CD14-positive monocyte (primary cell): ENCODE measurements at regions of chr10 and their contacts with region 1.

Region 1: DNA sequence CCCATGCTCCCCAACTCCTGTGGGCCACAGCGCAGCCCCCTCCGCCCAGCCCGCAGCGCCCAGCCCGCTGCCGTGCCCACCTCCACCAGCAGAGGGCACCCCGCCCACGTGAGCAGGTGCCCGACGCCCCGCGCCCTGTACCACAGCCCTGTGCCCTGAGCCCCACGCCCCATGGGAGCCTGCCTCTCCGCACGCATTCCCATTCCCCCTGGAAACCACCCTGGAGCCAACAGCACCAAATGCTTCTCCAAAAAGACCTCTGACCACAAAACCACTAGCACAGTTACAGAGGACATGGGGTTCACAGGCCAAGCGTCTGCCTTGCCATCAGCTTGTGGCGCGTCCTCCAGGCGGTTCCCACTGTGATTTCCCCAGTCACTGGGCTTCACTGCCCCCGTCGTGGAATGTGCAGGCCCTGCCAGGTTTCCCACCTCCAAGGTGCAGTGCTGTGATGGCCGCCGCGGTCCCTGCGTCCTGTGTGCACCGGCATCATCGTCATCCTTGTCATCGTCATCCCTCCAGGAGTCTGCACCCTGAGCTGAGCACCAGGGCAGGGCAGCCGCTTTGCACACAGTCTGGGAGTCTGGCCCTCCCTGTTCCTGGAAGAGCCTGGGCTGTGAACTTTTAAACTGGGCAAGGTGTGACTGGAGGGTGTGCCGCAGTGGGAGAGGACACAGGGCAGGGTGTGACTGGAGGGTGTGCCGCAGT is 61.7 kb downstream of the PWWP2B start:
- DNase-seq: peak; percentile 43 to 71 (median 49)
- H3K4me3 ChIP-seq: no peak overlapping the region
- H3K4me3 Mint-ChIP-seq: no peak overlapping the region
- H3K27ac ChIP-seq: no peak overlapping the region
- H3K27ac Mint-ChIP-seq: peak overlapping the region in 2 of 7 donors; percentile 15 to 25
- H3K4me1 ChIP-seq: peaks cover 0 to 8% of the 10 kb centered on the region in 2 donors
- H3K4me1 Mint-ChIP-seq: peaks cover 4% of the 10 kb centered on the region
- H3K27me3 ChIP-seq: peaks cover 0 to 2% of the 10 kb centered on the region in 2 donors
- H3K27me3 Mint-ChIP-seq: peaks cover 5 to 15% (median 8%) of the 10 kb centered on the region in 3 donors
- CTCF ChIP-seq: peak; percentile 94

Region 2: DNA sequence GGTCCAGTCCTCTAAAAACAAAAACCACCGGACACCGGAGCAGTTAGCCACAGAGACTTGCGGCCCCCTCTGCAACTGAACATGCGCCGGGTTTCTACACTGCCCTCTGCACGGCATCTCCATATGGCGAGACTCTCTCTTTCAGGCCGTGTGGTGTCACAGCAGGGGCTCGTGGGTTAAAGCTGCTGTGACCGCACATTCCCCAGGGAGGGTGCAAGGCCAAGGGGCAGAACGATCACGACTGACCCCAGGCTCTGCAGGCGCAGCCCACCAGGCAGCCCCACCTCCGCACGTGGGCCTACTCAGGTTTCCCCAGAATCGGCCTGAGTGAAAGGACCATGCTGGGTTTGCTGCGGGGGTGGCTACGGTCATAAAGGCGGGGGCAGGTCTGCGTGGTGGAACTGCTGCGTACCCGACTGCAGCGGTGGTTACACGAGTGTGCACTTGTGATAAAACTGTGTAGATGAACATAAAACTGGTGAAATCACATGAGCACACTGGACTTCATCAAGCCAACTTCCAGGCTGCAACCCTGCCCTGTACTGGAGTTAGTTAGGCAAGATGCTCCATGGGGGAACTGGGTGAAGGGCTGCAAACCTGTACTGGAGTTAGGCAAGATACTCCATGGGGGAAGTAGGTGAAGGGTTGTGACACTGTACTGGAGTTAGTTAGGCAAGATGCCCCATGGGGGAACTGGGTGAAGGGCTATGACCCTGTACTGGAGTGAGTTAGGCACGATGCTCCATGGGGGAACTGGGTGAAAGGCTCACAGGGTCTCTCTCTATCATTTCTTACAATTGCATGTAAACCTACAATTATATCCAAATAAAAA is 639.3 kb before region 1 on chr10:
- intact Hi-C with region 1: no loop called
- DNase-seq: peak in 1 of 3 donors; percentile 1
- H3K4me3 ChIP-seq: no peak overlapping the region
- H3K4me3 Mint-ChIP-seq: no peak overlapping the region
- H3K27ac ChIP-seq: no peak overlapping the region
- H3K27ac Mint-ChIP-seq: no peak overlapping the region
- H3K4me1 ChIP-seq: no peaks in the 10 kb centered on the region
- H3K4me1 Mint-ChIP-seq: no peaks in the 10 kb centered on the region
- H3K27me3 ChIP-seq: no peaks in the 10 kb centered on the region
- H3K27me3 Mint-ChIP-seq: peaks cover 4 to 8% (median 7%) of the 10 kb centered on the region in 3 donors
- CTCF ChIP-seq: no peak

Region 3: DNA sequence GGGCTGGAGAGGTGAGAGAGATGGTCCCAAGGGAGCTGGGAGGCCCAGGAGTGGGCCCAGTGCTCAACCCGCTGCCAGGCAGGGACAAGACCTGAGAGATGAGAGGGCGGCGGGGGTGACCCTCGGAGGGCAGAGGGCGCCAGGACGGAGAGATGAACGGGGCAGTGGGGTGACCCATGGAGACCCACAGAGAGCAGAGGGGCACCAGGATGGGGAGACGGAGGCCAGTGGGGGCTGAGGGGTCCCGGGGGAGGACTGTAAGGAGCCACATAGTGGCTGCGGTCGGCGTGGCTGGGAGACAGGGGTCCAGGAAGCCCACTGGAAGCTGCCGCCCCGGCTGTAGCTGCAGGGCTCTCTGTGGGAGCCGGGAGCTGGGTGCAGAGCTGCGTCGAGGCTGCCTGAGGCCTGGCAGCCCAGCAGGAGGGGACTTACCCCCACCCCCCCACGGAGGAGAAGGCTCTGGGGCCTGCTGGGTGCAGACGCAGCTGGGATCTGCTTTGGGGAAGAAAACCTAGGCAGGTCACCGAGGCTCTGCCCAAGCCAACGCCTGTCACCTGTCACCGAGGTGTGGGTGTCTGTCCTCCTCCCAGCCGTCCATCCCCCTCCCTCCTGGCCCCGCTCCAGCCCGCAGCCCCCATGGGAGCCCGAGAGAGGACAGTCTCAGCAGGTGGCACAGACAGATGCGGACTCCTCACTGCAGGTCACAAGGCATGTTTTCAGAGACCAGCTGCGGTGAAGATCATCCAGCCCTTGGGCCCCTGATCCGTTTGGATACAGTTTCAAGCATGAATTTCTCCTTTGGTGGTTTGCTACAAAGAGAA is 36.6 kb before region 1 on chr10:
- intact Hi-C with region 1: no loop called
- DNase-seq: no peak
- H3K4me3 ChIP-seq: peak overlapping the region; percentile 2 to 70 (median 17)
- H3K4me3 Mint-ChIP-seq: peak overlapping the region; percentile 62 to 72
- H3K27ac ChIP-seq: peak overlapping the region; percentile 91 to 96
- H3K27ac Mint-ChIP-seq: peak overlapping the region; percentile 91 to 99 (median 95)
- H3K4me1 ChIP-seq: peaks cover 67 to 69% of the 10 kb centered on the region in 2 donors
- H3K4me1 Mint-ChIP-seq: peaks cover 59% of the 10 kb centered on the region
- H3K27me3 ChIP-seq: no peaks in the 10 kb centered on the region
- H3K27me3 Mint-ChIP-seq: no peaks in the 10 kb centered on the region
- CTCF ChIP-seq: no peak

Region 4: GRCh38 chr10:132520177-132520811 is 61.5 kb after region 1 on chr10:
- intact Hi-C with region 1: loop called in 1 of 2 experiments (anchors 5 kb)
- DNase-seq: no peak
- H3K4me3 ChIP-seq: no peak overlapping the region
- H3K4me3 Mint-ChIP-seq: no peak overlapping the region
- H3K27ac ChIP-seq: no peak overlapping the region
- H3K27ac Mint-ChIP-seq: no peak overlapping the region
- H3K4me1 ChIP-seq: peaks cover 22 to 34% of the 10 kb centered on the region in 2 donors
- H3K4me1 Mint-ChIP-seq: peaks cover 23% of the 10 kb centered on the region
- H3K27me3 ChIP-seq: no peaks in the 10 kb centered on the region
- H3K27me3 Mint-ChIP-seq: peaks cover 4 to 24% (median 18%) of the 10 kb centered on the region in 3 donors
- CTCF ChIP-seq: no peak

Region 5: DNA sequence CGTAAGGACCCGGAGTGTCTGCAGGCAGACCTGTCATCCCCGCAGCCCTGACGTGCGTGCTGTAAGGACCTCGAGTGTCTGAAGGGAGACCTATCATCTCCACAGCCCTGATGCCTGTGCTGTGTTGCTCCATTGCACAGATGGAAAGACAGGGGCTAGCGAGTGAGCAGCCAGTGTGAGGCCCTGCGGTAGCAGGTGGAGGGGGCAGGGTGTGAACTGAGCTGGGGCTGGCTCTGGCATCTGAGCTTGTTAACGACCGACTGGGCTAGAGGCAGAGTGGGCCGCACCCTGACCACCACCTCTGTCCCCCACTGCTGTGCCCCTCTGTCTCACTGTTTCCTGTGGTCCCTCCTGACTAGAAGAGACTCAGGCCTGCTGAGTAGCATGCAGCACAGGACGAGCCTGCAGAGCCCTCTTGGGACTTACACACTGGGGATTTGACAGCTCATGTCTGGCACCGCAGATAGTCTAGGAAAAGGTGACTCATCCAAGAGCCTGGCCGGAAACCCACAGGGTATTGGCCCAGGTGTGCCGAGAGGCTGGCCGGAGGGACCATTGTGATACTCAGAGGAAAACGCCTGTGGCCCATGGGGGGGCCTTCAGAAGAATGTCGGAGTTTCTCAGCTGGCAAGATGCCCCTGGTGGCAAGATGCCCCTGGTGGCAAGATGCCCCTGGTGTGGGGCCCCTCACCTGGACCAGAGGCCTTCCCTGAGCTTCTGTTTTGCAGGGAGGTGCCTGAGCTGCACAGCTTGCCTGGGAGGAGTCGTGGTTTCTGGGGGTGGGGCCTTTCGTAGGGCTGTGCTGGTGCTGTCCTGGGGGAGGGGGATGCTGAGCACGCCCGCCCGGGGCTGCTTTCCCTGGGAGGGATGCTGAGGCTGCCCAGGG is 113.1 kb after region 1 on chr10:
- intact Hi-C with region 1: no loop called
- DNase-seq: peak; percentile 44 to 69 (median 62)
- H3K4me3 ChIP-seq: peak overlapping the region in 1 of 3 experiments; percentile 16
- H3K4me3 Mint-ChIP-seq: peak overlapping the region; percentile 2 to 64
- H3K27ac ChIP-seq: peak overlapping the region in 1 of 2 donors; percentile 46
- H3K27ac Mint-ChIP-seq: peak overlapping the region in 4 of 7 donors; percentile 26 to 85 (median 85)
- H3K4me1 ChIP-seq: peaks cover 52 to 53% of the 10 kb centered on the region in 2 donors
- H3K4me1 Mint-ChIP-seq: peaks cover 2% of the 10 kb centered on the region
- H3K27me3 ChIP-seq: no peaks in the 10 kb centered on the region
- H3K27me3 Mint-ChIP-seq: peaks cover 0 to 6% (median 0%) of the 10 kb centered on the region in 3 donors
- CTCF ChIP-seq: no peak

Region 6: DNA sequence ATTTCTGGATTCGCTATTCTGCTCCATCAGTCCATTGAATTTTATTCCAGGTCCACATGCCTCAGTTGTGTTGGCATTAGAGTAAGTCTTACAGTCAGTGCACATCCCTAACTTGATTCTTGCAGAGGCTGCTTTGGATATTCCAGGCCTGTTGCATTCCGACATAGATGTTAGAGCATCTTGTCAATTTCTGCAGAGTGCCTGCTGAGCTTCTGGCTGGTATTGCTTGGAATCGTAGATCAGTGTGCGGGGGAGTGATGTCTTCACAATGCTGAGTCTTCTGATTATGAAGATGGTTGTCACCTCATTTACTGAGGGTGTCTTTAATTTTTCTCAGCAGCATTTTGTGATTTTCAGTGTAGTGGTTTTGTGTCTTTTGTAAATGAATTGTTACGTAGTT is 124.0 kb after region 1 on chr10:
- intact Hi-C with region 1: loop called in 1 of 2 experiments (anchors 5 kb)
- DNase-seq: no peak
- H3K4me3 ChIP-seq: no peak overlapping the region
- H3K4me3 Mint-ChIP-seq: no peak overlapping the region
- H3K27ac ChIP-seq: no peak overlapping the region
- H3K27ac Mint-ChIP-seq: no peak overlapping the region
- H3K4me1 ChIP-seq: peaks cover 41 to 54% of the 10 kb centered on the region in 2 donors
- H3K4me1 Mint-ChIP-seq: peaks cover 54% of the 10 kb centered on the region
- H3K27me3 ChIP-seq: no peaks in the 10 kb centered on the region
- H3K27me3 Mint-ChIP-seq: peaks cover 0 to 14% (median 10%) of the 10 kb centered on the region in 3 donors
- CTCF ChIP-seq: no peak